Body of pancreas (tissue), 4 donors: ENCODE measurements at regions of chr11 and their contacts with region 1.

Region 1: GRCh38 chr11:128624269-128625175 is 37.2 kb upstream of the ETS1 start:
- DNase-seq: peak in 3 of 4 donors; percentile 34 to 49 (median 45)
- ATAC-seq: peak; percentile 75
- H3K4me3 ChIP-seq: no peak overlapping the region
- H3K27ac ChIP-seq: no peak overlapping the region
- H3K4me1 ChIP-seq: peaks cover 10% of the 10 kb centered on the region
- H3K27me3 ChIP-seq: no peaks in the 10 kb centered on the region
- CTCF ChIP-seq: no peak
- POLR2A ChIP-seq: no peak

Region 2: DNA sequence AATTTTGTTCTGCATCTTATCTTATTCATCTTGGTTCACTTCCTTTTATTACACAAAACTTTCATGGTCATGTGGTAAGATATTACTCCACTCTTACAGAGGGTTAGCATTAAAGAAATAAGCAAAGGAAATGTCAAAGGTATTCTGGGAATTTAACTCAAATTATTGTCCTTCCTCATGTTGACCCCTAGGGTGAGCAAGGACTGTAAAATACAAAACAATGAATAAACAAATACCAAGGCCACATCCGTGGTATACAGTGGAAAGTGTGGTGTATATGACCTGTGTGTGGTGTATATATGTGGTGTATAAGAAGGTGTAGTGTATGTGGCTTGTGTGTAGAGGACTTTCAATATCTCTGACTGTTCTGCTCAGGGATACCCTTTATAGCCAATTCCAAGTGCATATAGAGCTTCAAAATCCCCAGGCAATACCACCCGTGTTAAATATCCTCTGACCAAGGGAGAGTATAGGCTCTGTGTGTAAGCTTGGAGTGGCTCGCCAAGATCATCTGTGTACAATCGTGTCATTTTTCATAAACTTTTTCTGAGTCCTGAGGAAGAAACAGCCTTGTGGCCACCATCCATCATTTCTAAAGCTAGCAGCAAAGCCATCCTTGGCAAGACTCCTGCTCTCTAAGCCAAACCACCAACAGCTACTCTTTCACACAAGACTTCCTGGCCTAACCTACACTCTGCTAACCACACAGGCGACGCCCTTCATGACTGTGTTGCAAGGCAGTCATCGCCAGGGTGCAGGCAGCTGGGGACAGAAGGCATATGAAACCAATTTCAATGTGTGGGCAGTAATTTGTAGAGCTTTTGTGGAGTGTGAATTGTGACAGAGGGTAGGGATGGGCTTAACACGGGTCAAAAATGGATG is 585.1 kb before region 1 on chr11:
- intact Hi-C with region 1: loop called (anchors 10 kb)
- DNase-seq: peak in 1 of 4 donors; percentile 41
- ATAC-seq: no peak
- H3K4me3 ChIP-seq: no peak overlapping the region
- H3K27ac ChIP-seq: no peak overlapping the region
- H3K4me1 ChIP-seq: no peaks in the 10 kb centered on the region
- H3K27me3 ChIP-seq: no peaks in the 10 kb centered on the region
- CTCF ChIP-seq: no peak
- POLR2A ChIP-seq: no peak

Region 3: DNA sequence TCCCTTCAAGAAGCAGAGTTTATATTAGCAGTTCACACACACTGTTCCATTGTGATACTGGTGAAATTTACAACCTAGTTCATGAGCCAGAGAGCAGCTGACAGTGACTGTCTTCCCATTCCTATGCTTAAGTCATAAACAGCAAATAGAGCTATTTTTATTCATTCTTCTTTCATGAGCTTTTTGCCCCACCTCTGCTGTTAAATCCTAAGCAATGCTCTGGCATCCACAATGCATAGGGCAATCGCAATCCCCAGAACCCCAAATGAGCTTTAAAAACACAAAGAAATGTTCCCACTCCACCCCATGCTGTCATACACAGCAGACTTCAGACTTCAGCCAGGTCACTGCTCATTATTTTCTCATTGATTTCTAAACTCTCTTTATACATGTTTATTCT is 344.7 kb before region 1 on chr11:
- intact Hi-C with region 1: no loop called
- DNase-seq: no peak
- ATAC-seq: no peak
- H3K4me3 ChIP-seq: no peak overlapping the region
- H3K27ac ChIP-seq: no peak overlapping the region
- H3K4me1 ChIP-seq: no peaks in the 10 kb centered on the region
- H3K27me3 ChIP-seq: no peaks in the 10 kb centered on the region
- CTCF ChIP-seq: no peak
- POLR2A ChIP-seq: no peak

Region 4: GRCh38 chr11:128290106-128290840 is 334.2 kb before region 1 on chr11:
- intact Hi-C with region 1: loop called (anchors 5 kb)
- DNase-seq: peak; percentile 58 to 75 (median 62)
- ATAC-seq: peak; percentile 86
- H3K4me3 ChIP-seq: no peak overlapping the region
- H3K27ac ChIP-seq: peak overlapping the region in 3 of 4 donors; percentile 18 to 40 (median 29)
- H3K4me1 ChIP-seq: no peaks in the 10 kb centered on the region
- H3K27me3 ChIP-seq: no peaks in the 10 kb centered on the region
- CTCF ChIP-seq: peak; percentile 66 to 89 (median 83)
- POLR2A ChIP-seq: peak in 1 of 3 donors; percentile 13

Region 5: DNA sequence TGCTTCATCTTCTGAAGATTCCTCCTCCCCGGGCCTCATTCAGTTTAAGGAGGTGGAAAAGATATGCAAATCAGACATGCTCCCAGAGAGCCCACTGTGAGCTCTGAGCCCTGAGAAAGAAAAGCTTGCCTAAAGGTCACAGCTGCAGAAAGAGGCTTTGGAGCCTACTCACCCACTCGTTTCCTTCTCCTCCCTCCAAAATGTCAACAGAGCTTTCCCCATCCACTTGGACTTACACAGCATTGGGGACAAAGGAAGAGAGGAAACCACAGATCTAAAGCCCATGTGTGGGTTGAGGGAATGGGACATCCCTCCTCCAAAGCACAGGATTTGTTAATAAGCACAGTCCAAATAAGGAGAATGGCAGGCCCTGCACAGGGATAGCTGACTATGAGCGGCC is 195.6 kb before region 1 on chr11:
- intact Hi-C with region 1: no loop called
- DNase-seq: no peak
- ATAC-seq: no peak
- H3K4me3 ChIP-seq: no peak overlapping the region
- H3K27ac ChIP-seq: no peak overlapping the region
- H3K4me1 ChIP-seq: peaks cover 13% of the 10 kb centered on the region
- H3K27me3 ChIP-seq: no peaks in the 10 kb centered on the region
- CTCF ChIP-seq: no peak
- POLR2A ChIP-seq: no peak

Region 6: GRCh38 chr11:128824191-128825049 is 199.9 kb after region 1 on chr11:
- intact Hi-C with region 1: no loop called
- DNase-seq: no peak
- ATAC-seq: no peak
- H3K4me3 ChIP-seq: no peak overlapping the region
- H3K27ac ChIP-seq: no peak overlapping the region
- H3K4me1 ChIP-seq: peaks cover 3% of the 10 kb centered on the region
- H3K27me3 ChIP-seq: no peaks in the 10 kb centered on the region
- CTCF ChIP-seq: no peak
- POLR2A ChIP-seq: no peak